Activated CD4-positive, alpha-beta T cell treated with anti-CD3 and anti-CD28 coated beads, Interleukin-2, amount 10 ng/mL, durations not matched to agents 24 days and 14 days (primary cell): ENCODE measurements at regions of chr18 and their contacts with region 1.

Region 1: GRCh38 chr18:46333431-46334135 is 229.4 kb downstream of the HAUS1 start:
- DNase-seq: peak; percentile 85
- H3K4me3 Mint-ChIP-seq: peak overlapping the region; percentile 84
- H3K27ac Mint-ChIP-seq: peak overlapping the region; percentile 76
- H3K4me1 Mint-ChIP-seq: peaks cover 35% of the 10 kb centered on the region
- H3K27me3 Mint-ChIP-seq: peaks cover 67% of the 10 kb centered on the region

Region 2: GRCh38 chr18:46155641-46156051 is 177.9 kb before region 1 on chr18:
- intact Hi-C with region 1: loop called (anchors 5 kb)
- DNase-seq: peak; percentile 90
- H3K4me3 Mint-ChIP-seq: peak overlapping the region; percentile 64
- H3K27ac Mint-ChIP-seq: peak overlapping the region; percentile 87
- H3K4me1 Mint-ChIP-seq: peaks cover 65% of the 10 kb centered on the region
- H3K27me3 Mint-ChIP-seq: no peaks in the 10 kb centered on the region